PC-3 (cell line): ENCODE measurements at regions of chr16 and their contacts with region 1.

Region 1: GRCh38 chr16:22001591-22001990 is 675 bp upstream of the PDZD9 start:
- DNase-seq: peak; percentile 82
- ATAC-seq: peak; percentile 73
- H3K4me3 ChIP-seq: peak overlapping the region; percentile 58; the same call in 1 of the 2 replicates
- H3K27ac ChIP-seq: peak overlapping the region; percentile 95
- H3K4me1 ChIP-seq: peaks cover 30% of the 10 kb centered on the region
- H3K27me3 ChIP-seq: no peaks in the 10 kb centered on the region
- CTCF ChIP-seq: no peak

Region 2: DNA sequence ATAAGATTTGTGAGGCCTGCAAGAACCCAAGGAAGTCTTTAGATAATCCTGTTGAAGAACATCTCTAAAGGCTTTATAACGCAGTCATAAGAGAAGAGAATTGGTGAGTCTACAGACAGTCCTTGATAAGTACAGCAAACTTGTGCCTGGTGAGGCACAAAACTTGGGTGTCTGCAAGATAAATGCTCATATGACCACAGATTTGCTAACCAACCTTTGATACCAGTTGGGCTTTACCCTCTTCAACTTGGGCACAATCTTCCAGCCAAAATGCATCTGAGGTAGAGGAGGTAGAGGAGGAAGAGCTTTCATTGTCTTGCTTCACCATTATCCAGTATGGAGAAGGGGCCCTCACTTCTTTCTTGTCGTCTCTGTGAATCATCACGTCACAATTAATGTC is 17.5 kb before region 1 on chr16:
- CTCF ChIA-PET with region 1: no interaction called
- POLR2A ChIA-PET with region 1: interaction called, 13 read pairs
- intact Hi-C with region 1: no loop called
- DNase-seq: no peak
- ATAC-seq: no peak
- H3K4me3 ChIP-seq: no peak overlapping the region
- H3K27ac ChIP-seq: no peak overlapping the region
- H3K4me1 ChIP-seq: peaks cover 20% of the 10 kb centered on the region
- H3K27me3 ChIP-seq: no peaks in the 10 kb centered on the region
- CTCF ChIP-seq: no peak

Region 3: DNA sequence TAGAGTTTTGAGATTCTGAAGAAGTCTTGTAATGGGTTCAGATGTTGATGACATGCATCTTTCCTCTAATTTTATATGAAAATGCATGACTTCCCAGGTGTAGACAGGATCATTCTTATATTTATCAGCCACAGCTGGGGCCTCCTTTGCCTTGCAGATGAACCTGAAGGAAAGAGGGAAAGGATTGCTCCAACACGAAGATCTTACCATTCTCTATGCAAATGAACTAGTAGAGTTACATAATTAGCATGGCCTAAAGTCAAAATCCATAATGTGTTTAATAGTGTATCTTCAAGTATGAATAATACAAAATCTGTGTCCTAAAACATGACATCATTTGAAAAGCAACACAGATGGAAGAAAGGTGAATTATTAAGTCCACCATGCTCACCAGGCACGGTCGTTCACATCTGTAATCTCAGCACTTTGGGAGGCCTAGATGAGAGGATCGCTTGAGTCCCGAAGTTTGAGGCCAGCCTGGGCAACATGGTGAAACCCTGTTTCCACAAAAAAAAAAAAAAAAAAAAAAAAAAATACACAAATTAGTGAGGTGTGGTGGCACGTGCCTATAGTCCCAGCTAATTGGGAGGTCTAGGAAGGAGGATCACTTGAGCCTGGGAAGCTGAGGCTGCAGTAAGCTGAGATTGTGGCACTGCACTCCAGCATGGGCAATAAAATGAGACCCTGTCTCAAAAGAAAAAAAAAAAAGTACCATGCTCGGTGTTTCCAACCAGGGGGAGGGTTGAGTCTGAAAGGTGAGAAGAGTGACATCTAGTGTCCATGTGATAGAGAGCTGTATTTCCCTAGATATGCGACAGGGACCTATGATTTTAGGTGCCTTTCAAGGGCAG is 97.0 kb after region 1 on chr16:
- CTCF ChIA-PET with region 1: interaction called, 5 read pairs
- POLR2A ChIA-PET with region 1: no interaction called
- intact Hi-C with region 1: loop called (anchors 2 kb)
- DNase-seq: peak; percentile 60
- ATAC-seq: peak; percentile 77
- H3K4me3 ChIP-seq: no peak overlapping the region
- H3K27ac ChIP-seq: no peak overlapping the region
- H3K4me1 ChIP-seq: no peaks in the 10 kb centered on the region
- H3K27me3 ChIP-seq: no peaks in the 10 kb centered on the region
- CTCF ChIP-seq: peak; percentile 68